ENCODE measurements at regions of chr19 and their contacts with region 1.

Region 1: DNA sequence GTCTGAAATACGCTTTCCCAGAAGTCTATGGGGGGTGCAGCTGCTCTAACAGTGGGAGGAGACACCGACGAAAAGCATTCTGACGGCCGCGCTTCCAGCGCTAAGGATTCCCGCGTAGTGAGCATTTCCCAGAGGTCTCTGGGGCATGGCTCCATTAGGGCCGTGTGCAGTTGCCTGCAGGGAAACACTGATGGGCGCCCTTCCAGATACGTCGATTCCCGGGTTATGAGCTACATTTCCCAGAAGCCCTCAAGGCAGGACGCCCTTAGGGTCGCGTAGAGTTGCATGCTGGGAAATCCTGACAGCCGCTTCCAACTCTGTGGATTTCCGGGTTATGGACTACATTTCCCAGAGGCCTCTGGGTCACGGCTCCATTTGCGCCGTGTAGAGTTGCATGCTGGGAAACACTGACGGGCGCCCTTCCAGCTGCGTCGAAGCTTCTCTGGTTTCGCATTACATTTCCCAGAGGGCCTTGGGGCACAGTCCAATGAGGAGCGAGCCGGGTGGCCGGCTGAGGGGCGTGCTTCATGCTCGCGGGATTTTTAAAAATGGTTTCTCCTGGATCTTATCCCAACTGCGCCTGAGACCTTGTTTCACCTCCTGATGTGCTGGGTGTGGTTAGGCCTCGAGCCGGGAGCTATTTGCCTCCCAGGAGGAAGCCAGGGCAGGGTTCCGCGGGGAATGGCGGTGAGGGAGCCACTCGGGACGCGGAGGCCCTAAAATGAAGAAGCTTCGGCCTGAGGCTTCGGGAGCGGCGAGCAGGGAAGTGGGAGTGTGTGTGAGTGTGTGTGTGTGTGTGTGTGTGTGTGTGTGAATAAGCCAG is 17.2 kb upstream of the ZNF331 start:
- DNase-seq: peak; percentile 77 to 97 (median 85)
- ATAC-seq: peak; percentile 99
- H3K4me3 ChIP-seq: peak overlapping the region; percentile 54 to 63
- H3K4me3 Mint-ChIP-seq: peak overlapping the region; percentile 94
- H3K27ac ChIP-seq: peak overlapping the region; percentile 26 to 78
- H3K27ac Mint-ChIP-seq: peak overlapping the region; percentile 92
- H3K4me1 ChIP-seq: peaks cover 12% of the 10 kb centered on the region
- H3K4me1 Mint-ChIP-seq: peaks cover 17% of the 10 kb centered on the region
- H3K27me3 ChIP-seq: no peaks in the 10 kb centered on the region
- H3K27me3 Mint-ChIP-seq: no peaks in the 10 kb centered on the region
- CTCF ChIP-seq: no peak

Region 2: DNA sequence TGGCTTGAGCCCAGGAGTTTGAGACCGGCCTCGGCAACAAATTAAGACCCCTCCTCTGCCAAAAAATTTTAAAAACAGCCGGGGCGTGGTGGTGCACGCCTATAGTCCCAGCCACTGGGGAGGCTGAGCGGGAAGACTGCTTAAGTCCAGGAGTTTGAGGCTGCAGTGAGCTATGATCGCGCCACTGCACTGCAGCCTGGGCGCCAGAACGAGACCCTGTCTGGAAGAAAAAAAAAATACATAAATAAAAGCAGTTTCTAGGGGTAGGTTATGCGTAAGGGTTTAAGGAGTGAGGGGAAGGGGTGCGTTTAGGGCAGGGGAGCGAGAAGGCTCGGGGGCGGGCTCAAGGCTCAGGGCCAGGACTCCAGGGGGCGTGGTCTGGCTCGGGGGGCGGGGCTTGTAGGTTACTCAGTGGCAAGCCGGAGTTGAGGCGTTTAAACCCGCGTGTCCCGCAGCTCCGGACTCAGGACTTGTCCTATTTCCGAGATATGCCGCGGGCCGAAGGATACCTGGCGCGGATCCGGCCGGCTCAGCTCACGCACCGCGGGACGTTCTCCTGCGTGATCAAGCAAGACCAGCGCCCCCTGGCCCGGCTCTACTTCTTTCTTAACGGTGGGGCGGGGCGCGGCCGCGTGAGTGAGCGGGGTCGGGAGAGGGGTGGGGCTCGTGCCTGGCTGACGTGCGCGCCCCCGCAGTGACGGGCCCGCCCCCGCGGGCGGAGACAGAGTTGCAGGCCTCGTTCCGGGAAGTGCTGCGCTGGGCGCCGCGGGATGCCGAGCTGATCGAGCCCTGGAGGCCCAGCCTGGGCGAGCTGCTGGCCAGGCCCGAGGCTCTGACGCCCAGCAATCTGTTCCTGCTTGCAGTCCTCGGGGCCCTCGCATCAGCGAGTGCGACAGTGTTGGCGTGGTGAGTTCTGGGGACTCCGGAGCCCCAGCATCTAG is 1816.9 kb before region 1 on chr19:
- CTCF ChIA-PET with region 1: no interaction called
- POLR2A ChIA-PET with region 1: no interaction called
- intact Hi-C with region 1: loop called in 1 of 2 experiments (anchors 5 kb)
- DNase-seq: peak; percentile 91 to 99 (median 97)
- ATAC-seq: peak; percentile 91
- H3K4me3 ChIP-seq: peak overlapping the region; percentile 89 to 98
- H3K4me3 Mint-ChIP-seq: peak overlapping the region; percentile 89
- H3K27ac ChIP-seq: peak overlapping the region; percentile 88 to 92
- H3K27ac Mint-ChIP-seq: peak overlapping the region; percentile 89
- H3K4me1 ChIP-seq: peaks cover 25% of the 10 kb centered on the region
- H3K4me1 Mint-ChIP-seq: peaks cover 35% of the 10 kb centered on the region
- H3K27me3 ChIP-seq: no peaks in the 10 kb centered on the region
- H3K27me3 Mint-ChIP-seq: no peaks in the 10 kb centered on the region
- CTCF ChIP-seq: peak; percentile 56

Region 3: DNA sequence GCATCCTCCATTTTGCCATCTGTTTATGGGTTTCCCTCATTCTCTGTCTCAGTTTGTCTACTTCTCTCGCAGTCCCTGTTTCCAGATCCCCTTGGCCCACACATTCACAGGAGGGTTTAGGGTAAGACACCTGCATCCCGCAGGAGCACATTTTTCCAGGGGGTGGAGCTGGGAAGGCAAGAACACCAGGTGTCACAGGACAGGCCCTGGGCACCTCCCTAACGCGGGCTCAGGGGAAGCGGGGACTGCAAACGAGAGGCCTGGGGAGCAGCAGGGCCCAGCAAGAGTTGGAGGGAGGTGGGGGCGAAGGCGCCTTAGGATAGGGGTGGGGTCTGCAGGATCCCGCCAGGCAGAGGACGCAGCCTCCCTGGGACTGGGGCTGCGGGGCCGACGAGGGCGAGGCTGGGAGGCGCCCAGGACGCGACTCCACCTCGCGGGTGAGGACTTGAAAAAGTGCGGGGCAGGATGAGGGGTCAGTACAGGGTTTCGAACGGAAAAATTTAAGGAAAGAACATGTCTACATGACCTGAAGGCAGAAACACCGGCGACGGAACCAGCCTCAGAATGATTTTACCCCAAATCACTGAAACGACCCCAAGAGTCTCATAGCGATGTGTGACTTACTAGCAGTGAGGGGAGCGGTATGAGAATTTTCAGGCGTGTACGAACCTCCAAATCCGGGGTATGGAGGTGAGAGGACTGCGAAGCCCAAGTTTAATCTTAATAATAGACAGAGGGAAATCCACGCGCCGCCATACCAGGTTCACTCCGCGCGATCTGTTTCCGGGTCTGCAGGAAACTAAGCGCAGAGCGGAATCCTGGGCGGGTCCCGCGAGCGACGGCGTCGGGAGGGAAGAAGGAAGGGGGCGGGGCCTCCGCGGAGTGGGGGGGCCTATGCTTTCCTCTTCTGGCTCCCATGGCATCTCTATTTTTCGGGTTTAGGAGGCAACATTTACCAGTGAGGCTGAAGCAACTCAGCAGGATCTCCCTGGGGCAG is 483.4 kb before region 1 on chr19:
- CTCF ChIA-PET with region 1: no interaction called
- POLR2A ChIA-PET with region 1: no interaction called
- intact Hi-C with region 1: no loop called
- DNase-seq: peak in 1 of 9 experiments; percentile 8
- ATAC-seq: peak; percentile 36
- H3K4me3 ChIP-seq: no peak overlapping the region
- H3K4me3 Mint-ChIP-seq: peak overlapping the region; percentile 63
- H3K27ac ChIP-seq: no peak overlapping the region
- H3K27ac Mint-ChIP-seq: no peak overlapping the region
- H3K4me1 ChIP-seq: no peaks in the 10 kb centered on the region
- H3K4me1 Mint-ChIP-seq: no peaks in the 10 kb centered on the region
- H3K27me3 ChIP-seq: no peaks in the 10 kb centered on the region
- H3K27me3 Mint-ChIP-seq: peaks cover 33% of the 10 kb centered on the region
- CTCF ChIP-seq: no peak

Region 4: GRCh38 chr19:53333463-53334449 is 187.0 kb before region 1 on chr19 and contains the start of gene ZNF845:
- CTCF ChIA-PET with region 1: no interaction called
- POLR2A ChIA-PET with region 1: no interaction called
- intact Hi-C with region 1: loop called in 1 of 2 experiments (anchors 5 kb)
- DNase-seq: peak; percentile 93 to 98 (median 96)
- ATAC-seq: peak; percentile 98
- H3K4me3 ChIP-seq: peak within 1 kb of the TSS; percentile 81 to 98
- H3K4me3 Mint-ChIP-seq: peak within 1 kb of the TSS; percentile 92
- H3K27ac ChIP-seq: peak within 1 kb of the TSS; percentile 66 to 83
- H3K27ac Mint-ChIP-seq: peak within 1 kb of the TSS; percentile 81
- H3K4me1 ChIP-seq: no peaks in the 10 kb centered on the region
- H3K4me1 Mint-ChIP-seq: peaks cover 31% of the 10 kb centered on the region
- H3K27me3 ChIP-seq: peaks cover 0 to 4% of the 10 kb centered on the region in 2 experiments
- H3K27me3 Mint-ChIP-seq: peaks cover 3% of the 10 kb centered on the region
- CTCF ChIP-seq: no peak
- total RNA-seq, gene ZNF845: 10.9 to 11.7 TPM

Region 5: GRCh38 chr19:53431399-53432087 is 89.2 kb before region 1 on chr19 and contains the start of gene ZNF761:
- CTCF ChIA-PET with region 1: interaction called, 3 read pairs
- POLR2A ChIA-PET with region 1: interaction called, 4 read pairs
- intact Hi-C with region 1: loop called (anchors 1 to 2 kb)
- DNase-seq: peak; percentile 95 to 100 (median 97)
- ATAC-seq: peak; percentile 99
- H3K4me3 ChIP-seq: peak within 1 kb of the TSS; percentile 71 to 85
- H3K4me3 Mint-ChIP-seq: peak within 1 kb of the TSS; percentile 98
- H3K27ac ChIP-seq: peak within 1 kb of the TSS; percentile 79 to 84
- H3K27ac Mint-ChIP-seq: peak within 1 kb of the TSS; percentile 97
- H3K4me1 ChIP-seq: peaks cover 11% of the 10 kb centered on the region
- H3K4me1 Mint-ChIP-seq: peaks cover 41% of the 10 kb centered on the region
- H3K27me3 ChIP-seq: no peaks in the 10 kb centered on the region
- H3K27me3 Mint-ChIP-seq: no peaks in the 10 kb centered on the region
- CTCF ChIP-seq: peak; percentile 47
- total RNA-seq, gene ZNF761: 8.4 to 9.2 TPM

Region 6: GRCh38 chr19:53492153-53492552 is 28.6 kb before region 1 on chr19:
- CTCF ChIA-PET with region 1: no interaction called
- POLR2A ChIA-PET with region 1: no interaction called
- intact Hi-C with region 1: no loop called
- DNase-seq: no peak
- ATAC-seq: no peak
- H3K4me3 ChIP-seq: peak overlapping the region in 1 of 2 experiments; percentile 8
- H3K4me3 Mint-ChIP-seq: no peak overlapping the region
- H3K27ac ChIP-seq: no peak overlapping the region
- H3K27ac Mint-ChIP-seq: no peak overlapping the region
- H3K4me1 ChIP-seq: no peaks in the 10 kb centered on the region
- H3K4me1 Mint-ChIP-seq: no peaks in the 10 kb centered on the region
- H3K27me3 ChIP-seq: no peaks in the 10 kb centered on the region
- H3K27me3 Mint-ChIP-seq: no peaks in the 10 kb centered on the region
- CTCF ChIP-seq: no peak

Region 7: DNA sequence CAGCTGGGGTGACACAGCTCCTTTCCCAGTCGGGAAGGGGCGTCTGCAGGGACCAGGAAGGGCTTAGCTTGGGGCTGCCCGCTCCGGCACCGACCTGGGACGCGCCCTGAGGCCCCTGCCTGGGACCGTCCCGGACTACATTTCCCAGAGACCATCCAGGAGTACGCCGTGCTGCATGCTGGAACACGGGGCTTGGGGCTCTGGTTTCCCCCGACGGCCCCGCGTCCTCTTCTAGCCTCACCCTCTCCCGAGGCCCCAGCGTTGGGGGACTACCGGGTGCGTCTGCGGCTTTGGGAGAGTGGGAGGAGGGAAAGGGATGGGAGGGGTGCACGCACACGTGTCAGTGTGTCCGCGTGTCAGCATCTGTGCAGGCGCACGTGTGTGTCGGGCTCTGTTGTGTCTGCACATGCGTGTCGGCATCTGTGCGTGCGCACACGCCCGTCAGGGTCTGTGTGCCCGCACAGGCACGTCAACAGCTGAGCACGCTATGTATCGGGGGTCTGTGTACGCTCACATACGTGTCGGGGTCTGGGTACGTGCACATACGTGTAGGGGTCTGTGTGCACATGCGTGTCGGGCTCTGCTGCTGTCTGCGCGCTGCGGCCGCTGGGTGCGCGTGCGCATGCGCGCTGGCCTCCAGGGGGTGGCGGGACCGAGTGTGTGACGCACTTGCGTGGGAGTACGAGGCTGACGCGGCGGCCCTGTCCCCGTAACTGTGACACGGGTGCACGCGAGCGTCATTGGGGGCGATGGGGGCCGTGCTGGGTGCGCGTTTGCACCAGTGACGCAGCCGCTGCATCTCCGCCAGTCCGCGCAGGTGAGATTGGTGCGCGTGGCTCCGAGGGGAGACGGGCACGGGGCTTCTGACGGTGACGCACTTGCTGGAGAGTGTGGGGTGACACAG is 17.0 kb after region 1 on chr19 and contains the start of gene ZNF331:
- CTCF ChIA-PET with region 1: no interaction called
- POLR2A ChIA-PET with region 1: interaction called, 19 read pairs
- intact Hi-C with region 1: loop called (anchors 1 to 2 kb)
- DNase-seq: peak; percentile 74 to 97 (median 91)
- ATAC-seq: peak; percentile 78
- H3K4me3 ChIP-seq: peak within 1 kb of the TSS; percentile 71 to 87
- H3K4me3 Mint-ChIP-seq: peak within 1 kb of the TSS; percentile 94
- H3K27ac ChIP-seq: peak within 1 kb of the TSS; percentile 94 to 100
- H3K27ac Mint-ChIP-seq: peak within 1 kb of the TSS; percentile 98
- H3K4me1 ChIP-seq: peaks cover 11% of the 10 kb centered on the region
- H3K4me1 Mint-ChIP-seq: peaks cover 30% of the 10 kb centered on the region
- H3K27me3 ChIP-seq: no peaks in the 10 kb centered on the region
- H3K27me3 Mint-ChIP-seq: no peaks in the 10 kb centered on the region
- CTCF ChIP-seq: no peak
- total RNA-seq, gene ZNF331: 784 to 793 TPM

Region 8: DNA sequence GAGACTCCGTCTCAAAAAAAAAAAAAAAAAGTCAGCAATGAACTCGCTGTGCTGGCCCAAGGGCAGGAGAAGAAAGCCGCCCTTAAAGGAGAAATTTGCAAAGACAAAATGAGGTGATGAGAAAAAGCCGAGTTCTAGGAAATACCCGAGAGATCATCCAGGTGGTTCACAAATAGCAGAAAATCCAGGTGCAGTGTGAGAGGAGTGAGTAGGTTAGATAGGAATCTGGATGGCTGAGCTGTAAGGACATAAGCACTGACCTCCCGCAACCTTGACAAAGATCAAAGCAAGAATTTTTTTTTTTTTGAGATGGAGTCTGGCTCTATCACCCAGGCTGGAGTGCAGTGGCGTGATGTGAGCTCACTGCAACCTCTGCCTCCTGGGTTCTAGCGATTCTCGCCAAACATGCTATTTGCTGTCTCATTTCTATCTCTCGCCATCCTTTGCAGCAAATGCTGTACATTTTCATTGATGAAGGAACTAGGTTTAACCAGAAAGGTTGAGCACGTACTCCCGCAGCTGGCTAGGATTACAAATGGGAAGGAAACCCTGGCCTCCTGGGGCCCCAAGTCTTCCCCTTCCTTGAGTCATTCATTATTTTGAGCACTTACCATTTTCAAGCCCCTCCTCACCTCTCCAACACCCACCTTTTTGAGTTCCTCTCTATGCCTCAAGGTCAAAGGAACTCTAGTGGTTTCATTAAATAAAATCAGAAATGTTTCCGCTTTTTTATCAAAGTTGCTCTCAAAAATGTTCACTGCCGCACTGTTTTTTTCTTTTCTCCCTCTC is 264.5 kb after region 1 on chr19:
- CTCF ChIA-PET with region 1: no interaction called
- POLR2A ChIA-PET with region 1: no interaction called
- intact Hi-C with region 1: no loop called
- DNase-seq: no peak
- ATAC-seq: no peak
- H3K4me3 ChIP-seq: no peak overlapping the region
- H3K4me3 Mint-ChIP-seq: no peak overlapping the region
- H3K27ac ChIP-seq: no peak overlapping the region
- H3K27ac Mint-ChIP-seq: no peak overlapping the region
- H3K4me1 ChIP-seq: no peaks in the 10 kb centered on the region
- H3K4me1 Mint-ChIP-seq: no peaks in the 10 kb centered on the region
- H3K27me3 ChIP-seq: peaks cover 0 to 2% of the 10 kb centered on the region in 2 experiments
- H3K27me3 Mint-ChIP-seq: peaks cover 11% of the 10 kb centered on the region
- CTCF ChIP-seq: no peak

Region 9: DNA sequence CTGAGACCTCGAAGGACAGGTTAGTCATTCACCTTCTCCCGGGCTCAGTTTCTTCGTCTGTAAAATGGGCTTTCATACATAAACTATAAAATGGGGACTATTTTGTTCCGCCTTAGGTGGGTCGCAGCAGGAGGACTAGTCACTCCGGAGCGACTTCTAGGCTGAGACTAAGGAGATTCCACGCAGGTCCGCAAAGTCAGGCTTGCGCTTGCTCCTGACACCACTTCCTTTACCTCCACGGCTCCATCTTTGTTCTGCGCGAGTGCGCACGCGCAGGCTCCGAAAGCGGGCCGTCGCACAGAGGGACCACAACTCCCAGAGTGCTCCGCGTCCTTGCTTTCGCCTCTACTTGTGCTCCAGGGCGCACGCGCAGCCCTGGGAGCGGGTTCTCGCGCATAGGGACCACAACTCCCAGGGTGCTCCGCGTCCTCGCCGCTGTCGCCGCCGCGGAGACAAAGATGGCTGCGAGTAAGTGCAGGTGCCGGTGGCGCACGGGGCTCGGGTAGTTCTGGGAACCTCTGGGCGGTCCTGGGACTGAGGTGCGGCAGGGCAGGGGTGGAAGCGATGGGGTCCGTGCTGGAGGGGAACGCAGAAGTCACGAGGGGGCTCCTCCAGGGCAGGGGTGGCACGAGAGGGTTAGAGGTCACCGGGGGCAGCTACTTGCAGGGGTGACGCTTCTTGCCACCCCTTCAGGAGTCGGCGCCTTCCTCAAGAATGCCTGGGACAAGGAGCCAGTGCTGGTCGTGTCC is 581.8 kb after region 1 on chr19 and contains the start of gene NDUFA3:
- CTCF ChIA-PET with region 1: no interaction called
- POLR2A ChIA-PET with region 1: no interaction called
- intact Hi-C with region 1: loop called in 1 of 2 experiments (anchors 5 kb)
- DNase-seq: peak; percentile 94 to 100 (median 98)
- ATAC-seq: peak; percentile 99
- H3K4me3 ChIP-seq: peak within 1 kb of the TSS; percentile 66 to 81
- H3K4me3 Mint-ChIP-seq: peak within 1 kb of the TSS; percentile 99
- H3K27ac ChIP-seq: peak within 1 kb of the TSS; percentile 58 to 84
- H3K27ac Mint-ChIP-seq: peak within 1 kb of the TSS; percentile 96
- H3K4me1 ChIP-seq: peaks cover 10% of the 10 kb centered on the region
- H3K4me1 Mint-ChIP-seq: peaks cover 35% of the 10 kb centered on the region
- H3K27me3 ChIP-seq: no peaks in the 10 kb centered on the region
- H3K27me3 Mint-ChIP-seq: no peaks in the 10 kb centered on the region
- CTCF ChIP-seq: no peak
- total RNA-seq, gene NDUFA3: 51.8 to 66.8 TPM